ENCODE measurements at regions of chr6 and their contacts with region 1.

Region 1: GRCh38 chr6:32637219-32637880 is at the start of gene HLA-DQA1:
- DNase-seq: no peak
- ATAC-seq: peak; percentile 85
- H3K4me3 Mint-ChIP-seq: peak within 1 kb of the TSS; percentile 100
- H3K27ac Mint-ChIP-seq: peak within 1 kb of the TSS; percentile 100
- H3K4me1 Mint-ChIP-seq: peaks cover 72% of the 10 kb centered on the region
- H3K27me3 Mint-ChIP-seq: no peaks in the 10 kb centered on the region
- CTCF ChIP-seq: no peak
- total RNA-seq, gene HLA-DQA1: 628 and 664 TPM in 2 replicates

Region 2: GRCh38 chr6:32529697-32530429 is 107.5 kb before region 1 on chr6 and contains the start of gene HLA-DRB5:
- CTCF ChIA-PET with region 1: no interaction called
- POLR2A ChIA-PET with region 1: interaction called, 17 read pairs
- intact Hi-C with region 1: no loop called
- DNase-seq: peak; percentile 20
- ATAC-seq: peak; percentile 76
- H3K4me3 Mint-ChIP-seq: peak within 1 kb of the TSS; percentile 92
- H3K27ac Mint-ChIP-seq: peak within 1 kb of the TSS; percentile 99
- H3K4me1 Mint-ChIP-seq: peaks cover 28% of the 10 kb centered on the region
- H3K27me3 Mint-ChIP-seq: no peaks in the 10 kb centered on the region
- CTCF ChIP-seq: no peak
- total RNA-seq, gene HLA-DRB5: 196 and 199 TPM in 2 replicates

Region 3: DNA sequence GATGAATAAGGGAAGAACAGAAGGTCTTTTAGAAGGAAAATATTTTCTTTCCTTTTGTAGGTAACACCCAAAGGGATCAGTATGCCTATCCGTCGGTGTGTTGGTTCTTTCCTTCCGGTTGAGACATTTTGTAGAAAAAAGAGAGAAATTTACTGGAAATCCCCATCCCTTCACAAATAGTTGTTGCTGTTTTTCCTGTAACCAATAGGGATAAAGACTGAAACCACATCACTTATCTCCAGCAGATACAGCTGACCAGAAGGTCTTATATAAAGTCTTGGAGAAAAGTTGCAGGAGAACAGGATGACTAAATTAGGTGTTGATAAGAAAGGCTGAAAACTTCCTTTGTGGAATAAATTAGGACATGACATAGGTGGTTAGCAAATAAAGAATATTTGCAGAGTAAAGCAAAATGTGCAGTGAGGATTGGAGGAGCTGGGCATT is 32.9 kb before region 1 on chr6:
- CTCF ChIA-PET with region 1: no interaction called
- POLR2A ChIA-PET with region 1: interaction called, 68 read pairs
- intact Hi-C with region 1: loop called (anchors 1 kb)
- DNase-seq: no peak
- ATAC-seq: peak; percentile 68
- H3K4me3 Mint-ChIP-seq: peak overlapping the region; percentile 74
- H3K27ac Mint-ChIP-seq: peak overlapping the region; percentile 93
- H3K4me1 Mint-ChIP-seq: peaks cover 76% of the 10 kb centered on the region
- H3K27me3 Mint-ChIP-seq: no peaks in the 10 kb centered on the region
- CTCF ChIP-seq: no peak

Region 4: DNA sequence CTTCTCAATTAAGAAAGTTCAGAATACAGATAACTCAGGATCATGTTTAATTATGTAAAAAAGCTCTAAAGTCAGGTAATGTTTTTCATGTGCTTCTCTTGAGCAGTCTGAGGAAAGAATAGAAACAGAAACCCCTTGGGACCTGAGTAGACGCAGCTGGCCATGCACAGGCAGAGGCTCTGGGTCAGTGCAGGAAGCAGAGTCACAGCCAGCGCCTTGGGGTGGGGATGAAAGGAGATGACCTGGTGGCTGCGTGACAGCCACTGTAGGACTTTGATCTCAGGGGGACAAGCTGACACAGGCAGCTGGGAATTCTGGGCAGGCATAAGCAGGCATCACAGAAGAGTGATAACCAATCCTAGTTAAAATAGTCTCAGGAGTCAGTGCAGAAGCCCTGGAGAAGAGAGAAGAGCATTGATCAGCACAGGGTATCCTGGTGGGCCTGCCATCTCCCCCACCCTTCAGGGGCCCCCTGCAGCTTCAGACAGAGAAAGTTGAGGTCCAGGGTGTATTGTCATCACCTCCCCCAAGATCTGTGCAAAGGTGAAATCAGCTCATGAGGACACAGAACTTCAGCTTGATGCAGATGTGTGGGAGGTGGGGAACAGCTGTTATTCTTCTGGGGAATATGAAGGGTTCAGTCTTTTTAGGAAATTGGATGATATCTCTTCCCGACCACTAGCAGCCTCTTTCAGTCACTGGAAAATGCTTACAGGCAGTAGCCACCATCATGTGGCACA is 22.7 kb after region 1 on chr6:
- CTCF ChIA-PET with region 1: no interaction called
- POLR2A ChIA-PET with region 1: interaction called, 59 read pairs
- intact Hi-C with region 1: loop called (anchors 2 kb)
- DNase-seq: no peak
- ATAC-seq: peak; percentile 83
- H3K4me3 Mint-ChIP-seq: peak overlapping the region; percentile 65
- H3K27ac Mint-ChIP-seq: peak overlapping the region; percentile 93
- H3K4me1 Mint-ChIP-seq: peaks cover 66% of the 10 kb centered on the region
- H3K27me3 Mint-ChIP-seq: no peaks in the 10 kb centered on the region
- CTCF ChIP-seq: no peak

Region 5: GRCh38 chr6:32685603-32686002 is 48.3 kb after region 1 on chr6:
- CTCF ChIA-PET with region 1: no interaction called
- POLR2A ChIA-PET with region 1: interaction called, 31 read pairs
- intact Hi-C with region 1: no loop called
- DNase-seq: no peak
- ATAC-seq: peak; percentile 70
- H3K4me3 Mint-ChIP-seq: peak overlapping the region; percentile 58
- H3K27ac Mint-ChIP-seq: peak overlapping the region; percentile 93
- H3K4me1 Mint-ChIP-seq: peaks cover 84% of the 10 kb centered on the region
- H3K27me3 Mint-ChIP-seq: no peaks in the 10 kb centered on the region
- CTCF ChIP-seq: no peak

Region 6: GRCh38 chr6:32741031-32741960 is 103.9 kb after region 1 on chr6 and contains the start of gene HLA-DQA2:
- CTCF ChIA-PET with region 1: no interaction called
- POLR2A ChIA-PET with region 1: interaction called, 68 read pairs
- intact Hi-C with region 1: no loop called
- DNase-seq: peak; percentile 41
- ATAC-seq: peak; percentile 99
- H3K4me3 Mint-ChIP-seq: peak within 1 kb of the TSS; percentile 81
- H3K27ac Mint-ChIP-seq: peak within 1 kb of the TSS; percentile 83
- H3K4me1 Mint-ChIP-seq: peaks cover 6% of the 10 kb centered on the region
- H3K27me3 Mint-ChIP-seq: peaks cover 19% of the 10 kb centered on the region
- CTCF ChIP-seq: no peak
- total RNA-seq, gene HLA-DQA2: 231 and 237 TPM in 2 replicates